Upper lobe of right lung (tissue), 1 donor: ENCODE measurements at regions of chr12 and their contacts with region 1.

Region 1: GRCh38 chr12:77925536-77926108 is 94.9 kb downstream of the NAV3 start:
- DNase-seq: peak; percentile 64
- ATAC-seq: peak; percentile 92
- H3K4me3 ChIP-seq: no peak overlapping the region
- H3K27ac ChIP-seq: no peak overlapping the region
- H3K4me1 ChIP-seq: no peaks in the 10 kb centered on the region
- H3K27me3 ChIP-seq: no peaks in the 10 kb centered on the region
- CTCF ChIP-seq: peak; percentile 83

Region 2: GRCh38 chr12:77152623-77153193 is 772.9 kb before region 1 on chr12:
- intact Hi-C with region 1: loop called (anchors 10 kb)
- DNase-seq: no peak
- ATAC-seq: no peak
- H3K4me3 ChIP-seq: no peak overlapping the region
- H3K27ac ChIP-seq: no peak overlapping the region
- H3K4me1 ChIP-seq: no peaks in the 10 kb centered on the region
- H3K27me3 ChIP-seq: no peaks in the 10 kb centered on the region
- CTCF ChIP-seq: peak; percentile 47

Region 3: GRCh38 chr12:78146365-78146772 is 220.7 kb after region 1 on chr12:
- intact Hi-C with region 1: no loop called
- DNase-seq: no peak
- ATAC-seq: peak; percentile 48
- H3K4me3 ChIP-seq: no peak overlapping the region
- H3K27ac ChIP-seq: no peak overlapping the region
- H3K4me1 ChIP-seq: no peaks in the 10 kb centered on the region
- H3K27me3 ChIP-seq: no peaks in the 10 kb centered on the region
- CTCF ChIP-seq: peak; percentile 85